ENCODE measurements at regions of chr2 and their contacts with region 1.

Region 1: DNA sequence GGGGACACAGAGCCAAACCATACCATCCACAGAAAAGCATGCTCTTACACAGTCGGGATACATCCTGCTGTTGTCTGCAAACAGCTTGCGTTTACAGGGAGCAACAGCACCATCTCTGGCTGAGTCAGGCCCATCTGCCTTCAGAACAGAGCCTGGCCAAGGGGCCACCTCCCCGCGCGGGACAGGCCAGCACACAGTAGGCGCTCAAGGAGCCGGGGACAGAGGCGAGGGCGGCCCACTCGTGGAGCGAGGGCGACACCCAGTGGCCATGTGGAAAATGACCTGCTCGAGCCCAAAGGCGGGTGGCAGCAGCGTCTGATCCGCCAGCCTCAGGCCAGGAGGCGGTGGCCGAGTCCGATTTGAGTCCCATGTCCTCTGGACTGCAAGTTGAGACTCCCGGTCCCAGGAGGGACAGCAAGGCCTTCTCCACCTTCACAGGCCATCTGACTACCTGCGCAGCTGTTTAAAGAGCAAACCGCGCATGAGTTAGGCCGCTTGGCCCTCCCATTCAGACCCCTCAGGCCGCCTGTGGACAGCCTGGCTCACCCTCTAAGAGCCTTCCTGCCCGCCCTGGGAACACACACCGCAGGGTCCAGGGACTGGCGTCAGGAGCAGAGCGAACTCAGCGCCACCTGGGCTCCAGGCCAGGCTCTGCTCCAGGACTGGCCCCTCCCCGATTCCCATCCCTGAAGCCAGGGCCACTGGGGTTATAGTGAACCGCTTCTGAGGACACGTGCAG is 38.3 kb downstream of the TTC32 start:
- DNase-seq: peak; percentile 57 to 70
- H3K4me3 ChIP-seq: no peak overlapping the region
- H3K27ac ChIP-seq: no peak overlapping the region
- H3K4me1 ChIP-seq: no peaks in the 10 kb centered on the region
- H3K27me3 ChIP-seq: no peaks in the 10 kb centered on the region
- CTCF ChIP-seq: peak; percentile 92 to 97 (median 92)
- POLR2A ChIP-seq: no peak

Region 2: DNA sequence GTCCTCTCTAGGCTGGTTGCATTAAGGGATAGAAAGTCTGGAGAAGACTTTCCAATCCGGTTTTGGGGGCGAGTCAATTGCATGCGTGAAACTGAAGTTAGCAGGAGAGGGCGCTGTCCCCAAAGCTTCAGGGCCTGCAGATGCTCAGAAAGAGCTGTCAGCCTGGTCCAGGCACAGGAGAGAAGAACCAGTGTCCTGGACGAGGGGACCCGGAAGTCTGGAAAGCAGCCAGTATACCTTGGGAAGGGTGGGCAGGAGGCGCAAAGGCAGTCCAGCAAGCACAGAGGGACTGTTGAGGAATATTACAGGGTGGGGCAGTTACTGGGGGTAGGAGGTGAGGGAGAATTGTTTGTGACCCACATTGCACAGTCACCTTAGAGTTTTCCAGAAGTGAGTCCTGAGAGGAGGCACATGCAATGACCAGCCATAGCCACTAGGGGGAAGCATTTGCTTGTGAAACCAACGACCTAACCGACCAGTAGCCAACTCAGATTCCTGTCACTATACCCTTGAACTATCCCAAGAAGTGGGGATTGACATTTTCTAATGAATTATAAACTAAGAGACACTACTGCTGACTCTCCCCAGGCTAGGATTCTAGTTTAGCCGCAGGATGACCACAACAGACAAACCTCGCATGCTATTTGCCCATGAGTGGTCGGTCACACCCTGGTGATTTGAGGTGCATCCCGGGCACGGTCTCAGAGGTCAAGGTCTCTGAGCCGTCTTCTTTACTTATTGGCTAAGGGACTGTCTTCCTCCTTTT is 1475.8 kb before region 1 on chr2:
- intact Hi-C with region 1: loop called (anchors 10 kb)
- DNase-seq: peak; percentile 82 to 85
- H3K4me3 ChIP-seq: no peak overlapping the region
- H3K27ac ChIP-seq: no peak overlapping the region
- H3K4me1 ChIP-seq: no peaks in the 10 kb centered on the region
- H3K27me3 ChIP-seq: no peaks in the 10 kb centered on the region
- CTCF ChIP-seq: peak; percentile 84 to 92 (median 88)
- POLR2A ChIP-seq: no peak

Region 3: DNA sequence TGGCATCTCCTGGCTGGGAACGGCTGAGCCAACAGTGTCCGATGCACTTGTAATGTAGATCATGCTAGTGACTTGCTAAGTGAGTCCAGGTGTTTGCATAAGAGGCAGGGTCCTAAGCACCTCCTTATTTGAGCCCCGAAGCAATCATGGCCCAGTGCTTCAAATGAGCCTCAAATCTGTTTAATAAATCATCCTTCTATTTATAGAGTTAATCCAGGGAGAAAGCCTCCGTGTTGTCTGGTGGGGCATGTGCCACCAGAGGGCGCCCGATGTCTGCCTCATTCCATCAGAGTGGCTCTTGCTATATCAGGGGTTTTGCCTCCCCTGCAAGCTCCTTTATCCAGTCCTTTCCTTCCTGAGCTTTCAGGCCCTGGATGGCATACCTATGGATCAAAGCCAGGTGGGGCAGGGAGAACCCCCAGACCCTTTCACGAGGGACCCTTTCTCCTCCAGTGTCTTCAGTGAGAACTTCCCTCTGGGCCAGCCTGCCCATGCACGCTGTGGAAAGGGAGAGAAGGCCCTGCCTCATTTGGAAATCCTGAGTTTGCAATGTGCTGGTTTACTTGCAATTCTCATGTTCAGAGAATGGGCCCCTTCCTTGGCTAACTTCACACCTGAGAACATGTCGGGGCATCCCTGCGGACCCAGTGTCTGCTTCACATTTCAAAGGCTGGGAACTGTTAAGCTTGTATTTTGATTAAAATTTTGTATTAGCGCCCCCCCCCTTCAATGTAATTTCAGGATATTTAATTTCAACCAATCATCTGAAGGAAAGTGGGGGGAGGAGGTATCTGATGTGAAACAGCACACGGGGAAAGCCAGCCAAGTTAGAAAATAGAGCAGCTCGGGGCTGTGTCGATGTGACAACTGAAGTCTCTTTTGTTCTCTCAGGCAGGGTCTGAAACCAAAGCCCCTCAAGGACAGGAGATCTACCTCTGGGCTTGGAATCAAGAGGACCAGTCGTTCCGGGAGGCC is 1342.7 kb before region 1 on chr2:
- intact Hi-C with region 1: loop called (anchors 10 kb)
- DNase-seq: peak; percentile 88 to 92
- H3K4me3 ChIP-seq: no peak overlapping the region
- H3K27ac ChIP-seq: peak overlapping the region; percentile 69 to 79
- H3K4me1 ChIP-seq: peaks cover 4 to 10% of the 10 kb centered on the region in 2 donors
- H3K27me3 ChIP-seq: no peaks in the 10 kb centered on the region
- CTCF ChIP-seq: peak; percentile 76 to 94 (median 90)
- POLR2A ChIP-seq: no peak

Measured in uterus (tissue), 4 donors.